MCF 10A (cell line): ENCODE measurements at regions of chr20 and their contacts with region 1.

Region 1: GRCh38 chr20:43408848-43409576 is 48.7 kb upstream of the SRSF6 start:
- DNase-seq: peak; percentile 53
- H3K4me3 Mint-ChIP-seq: no peak overlapping the region
- H3K27ac Mint-ChIP-seq: no peak overlapping the region
- H3K4me1 Mint-ChIP-seq: peaks cover 7% of the 10 kb centered on the region
- H3K27me3 Mint-ChIP-seq: peaks cover 38% of the 10 kb centered on the region
- CTCF ChIP-seq: peak; percentile 65

Region 2: DNA sequence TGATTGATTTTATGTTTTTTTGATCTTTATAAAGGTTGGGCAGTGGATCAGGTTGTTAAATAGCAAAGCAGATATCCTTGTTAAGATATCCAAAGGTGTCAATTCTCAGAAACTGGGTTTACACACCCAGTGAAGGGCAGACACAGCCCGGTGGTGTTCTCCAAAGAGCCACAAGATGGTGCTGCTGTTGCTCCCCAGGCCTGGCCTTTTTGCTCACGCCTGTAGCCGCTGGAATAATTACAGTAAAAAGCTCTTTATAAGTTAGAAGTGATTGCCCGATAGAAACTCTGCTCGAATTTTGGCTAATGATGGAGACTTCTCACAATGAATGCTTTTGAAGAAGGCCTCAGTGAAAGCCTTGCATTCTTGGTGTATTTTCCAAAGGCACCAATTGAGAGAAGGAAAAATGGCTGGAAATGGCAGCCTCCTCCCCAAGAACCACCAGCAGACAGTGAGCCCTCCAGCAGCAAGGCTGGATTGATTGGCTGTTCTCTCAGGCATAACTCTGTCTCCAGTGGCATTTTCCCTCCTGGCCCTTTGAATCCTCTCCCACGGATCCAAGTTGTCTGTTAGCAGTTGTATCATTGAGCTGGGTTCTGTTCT is 1670.3 kb before region 1 on chr20:
- CTCF ChIA-PET with region 1: interaction called, 31 read pairs
- POLR2A ChIA-PET with region 1: no interaction called
- intact Hi-C with region 1: loop called (anchors 1 kb)
- DNase-seq: peak; percentile 56
- H3K4me3 Mint-ChIP-seq: no peak overlapping the region
- H3K27ac Mint-ChIP-seq: no peak overlapping the region
- H3K4me1 Mint-ChIP-seq: no peaks in the 10 kb centered on the region
- H3K27me3 Mint-ChIP-seq: peaks cover 4% of the 10 kb centered on the region
- CTCF ChIP-seq: peak; percentile 81

Region 3: GRCh38 chr20:43376831-43377230 is 32.2 kb before region 1 on chr20:
- CTCF ChIA-PET with region 1: interaction called, 10 read pairs
- POLR2A ChIA-PET with region 1: no interaction called
- intact Hi-C with region 1: no loop called
- DNase-seq: no peak
- H3K4me3 Mint-ChIP-seq: no peak overlapping the region
- H3K27ac Mint-ChIP-seq: no peak overlapping the region
- H3K4me1 Mint-ChIP-seq: no peaks in the 10 kb centered on the region
- H3K27me3 Mint-ChIP-seq: peaks cover 11% of the 10 kb centered on the region
- CTCF ChIP-seq: no peak

Region 4: GRCh38 chr20:43389892-43390626 is 19.0 kb before region 1 on chr20:
- CTCF ChIA-PET with region 1: interaction called, 24 read pairs
- POLR2A ChIA-PET with region 1: no interaction called
- intact Hi-C with region 1: no loop called
- DNase-seq: no peak
- H3K4me3 Mint-ChIP-seq: no peak overlapping the region
- H3K27ac Mint-ChIP-seq: no peak overlapping the region
- H3K4me1 Mint-ChIP-seq: no peaks in the 10 kb centered on the region
- H3K27me3 Mint-ChIP-seq: no peaks in the 10 kb centered on the region
- CTCF ChIP-seq: peak; percentile 38

Region 5: GRCh38 chr20:43397147-43397546 is 11.9 kb before region 1 on chr20:
- CTCF ChIA-PET with region 1: interaction called, 24 read pairs
- POLR2A ChIA-PET with region 1: interaction called, 4 read pairs
- intact Hi-C with region 1: no loop called
- DNase-seq: no peak
- H3K4me3 Mint-ChIP-seq: no peak overlapping the region
- H3K27ac Mint-ChIP-seq: no peak overlapping the region
- H3K4me1 Mint-ChIP-seq: no peaks in the 10 kb centered on the region
- H3K27me3 Mint-ChIP-seq: peaks cover 10% of the 10 kb centered on the region
- CTCF ChIP-seq: no peak